Dorsolateral prefrontal cortex (tissue), 120 donors: ENCODE measurements at regions of chr4 and their contacts with region 1.

Region 1: DNA sequence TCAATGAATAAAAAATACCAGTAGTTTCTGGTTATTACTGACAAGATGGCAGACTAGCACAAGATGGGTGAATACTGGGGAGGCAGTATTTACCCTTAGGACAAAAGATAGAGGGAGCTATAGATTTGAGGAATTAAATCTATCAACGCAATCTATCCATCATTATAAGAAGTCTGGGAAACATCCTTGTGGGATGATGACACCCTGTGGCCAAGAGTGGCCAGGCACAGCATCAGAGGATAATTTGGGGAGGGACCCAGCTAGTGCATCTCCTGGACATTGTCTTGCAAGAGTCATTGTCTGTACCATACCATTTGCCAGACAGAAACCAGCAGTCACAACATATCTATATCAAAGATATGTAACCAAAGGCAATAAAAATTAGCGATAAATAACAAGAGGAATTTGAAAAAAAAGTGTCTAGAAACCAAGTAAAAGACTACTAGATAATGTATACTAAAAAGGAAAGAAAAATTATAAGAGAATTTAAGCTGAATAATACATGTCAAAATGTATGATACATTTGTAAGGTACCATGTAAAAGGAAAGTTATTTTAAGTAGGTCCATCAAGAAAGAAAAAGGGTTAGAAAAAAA is 22.9 kb downstream of the KCTD8 start:
- DNase-seq: peak in 5 of 10 donors; percentile 45 to 59 (median 50)
- H3K4me3 ChIP-seq: no peak overlapping the region
- H3K27ac ChIP-seq: no peak overlapping the region
- H3K27me3 ChIP-seq: no peaks in the 10 kb centered on the region
- CTCF ChIP-seq: peak in 55 of 56 donors; percentile 36 to 83 (median 71)

Region 2: GRCh38 chr4:44256414-44256813 is 169.3 kb before region 1 on chr4:
- intact Hi-C with region 1: loop called in 1 of 2 experiments (anchors 5 kb)
- DNase-seq: no peak
- H3K4me3 ChIP-seq: no peak overlapping the region
- H3K27ac ChIP-seq: peak overlapping the region in 18 of 59 donors; percentile 5 to 66 (median 28)
- H3K27me3 ChIP-seq: no peaks in the 10 kb centered on the region
- CTCF ChIP-seq: peak in 49 of 56 donors; percentile 13 to 65 (median 34)